ENCODE measurements at regions of chr2 and their contacts with region 1.

Region 1: DNA sequence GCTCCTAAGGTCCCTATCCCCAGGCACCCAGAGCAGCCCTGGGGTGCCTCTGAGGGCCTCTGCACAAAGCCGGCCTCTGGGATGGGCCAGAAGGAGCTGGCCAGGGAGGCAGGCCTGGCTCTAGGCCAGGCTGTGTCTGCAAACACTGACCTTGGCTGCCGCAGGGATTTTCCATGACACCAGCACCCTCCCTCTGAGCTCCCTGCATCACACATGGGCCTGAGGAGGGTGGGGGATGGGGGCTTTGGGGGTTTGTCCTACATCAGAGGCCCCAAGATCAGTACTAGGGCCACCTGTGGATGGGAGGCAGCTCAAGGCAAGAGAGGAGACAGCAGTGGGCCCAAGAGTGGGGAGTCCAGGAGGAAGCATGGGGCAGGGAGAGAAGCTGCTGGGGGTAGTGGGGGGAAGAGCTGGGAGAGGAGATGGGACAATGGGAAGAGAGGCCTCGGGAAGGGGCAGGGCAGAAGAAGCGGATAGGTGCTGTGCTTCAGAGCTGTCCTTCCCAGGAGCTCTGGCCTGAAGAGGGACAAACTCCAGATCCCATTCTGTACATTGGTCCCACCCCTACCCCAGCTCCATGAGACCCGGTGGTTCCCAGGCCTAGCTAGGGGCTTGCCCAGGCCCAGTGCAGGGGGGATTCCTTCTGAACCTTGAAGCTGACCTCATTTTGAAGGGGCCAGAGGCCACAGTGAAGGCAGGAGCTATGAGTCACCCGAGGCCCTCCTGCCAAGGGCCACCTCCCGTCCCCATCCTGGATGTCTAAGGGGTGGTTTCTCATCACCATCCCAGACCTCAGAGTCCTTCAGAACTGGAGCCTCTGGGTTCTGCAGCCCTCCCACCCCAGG is 28.0 kb downstream of the KCNK3 start:
- DNase-seq: peak; percentile 86 to 95
- ATAC-seq: peak; percentile 59 to 67
- H3K4me3 ChIP-seq: no peak overlapping the region
- H3K27ac ChIP-seq: peak overlapping the region; percentile 94
- H3K4me1 ChIP-seq: peaks cover 80% of the 10 kb centered on the region
- CTCF ChIP-seq: no peak
- EP300 ChIP-seq: peak; percentile 43 to 70; a peak in 3 of 5 replicates
- POLR2A ChIP-seq: no peak; the same call in 1 of the 2 replicates
- RAD21 ChIP-seq: 0 out of 5 replicates have a peak, but pooled peaks of 1 of the 2 experiments have one; percentile 34

Region 2: DNA sequence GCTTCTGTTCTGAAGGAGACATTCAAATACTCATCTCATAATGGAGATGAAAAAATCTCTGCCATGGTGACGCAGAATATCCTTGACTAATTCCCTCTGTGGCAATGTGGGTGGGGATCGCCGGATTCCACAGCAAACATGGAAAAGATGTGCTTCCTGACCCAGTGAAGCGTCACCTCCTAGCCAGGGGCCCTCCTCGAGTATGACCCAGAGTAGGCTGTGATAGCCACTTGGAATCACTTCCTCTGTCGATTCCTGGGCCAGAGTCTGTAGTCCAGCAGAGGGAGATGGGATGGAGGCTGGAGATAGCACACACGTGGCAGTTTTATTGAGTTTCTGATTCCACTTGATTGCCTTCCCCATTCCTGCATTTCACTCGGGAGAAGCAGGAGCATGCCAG is 282.0 kb before region 1 on chr2:
- CTCF ChIA-PET with region 1: no interaction called
- POLR2A ChIA-PET with region 1: no interaction called
- DNase-seq: no peak
- ATAC-seq: peak; percentile 48 to 77; a peak in 4 of 6 replicates
- H3K4me3 ChIP-seq: no peak overlapping the region
- H3K27ac ChIP-seq: no peak overlapping the region
- H3K4me1 ChIP-seq: no peaks in the 10 kb centered on the region
- CTCF ChIP-seq: no peak
- EP300 ChIP-seq: no peak
- POLR2A ChIP-seq: no peak
- RAD21 ChIP-seq: no peak

Region 3: GRCh38 chr2:26735096-26735495 is 14.6 kb after region 1 on chr2:
- CTCF ChIA-PET with region 1: interaction called, 14 read pairs
- POLR2A ChIA-PET with region 1: interaction called, 3 read pairs
- DNase-seq: peak in 1 of 2 experiments; percentile 86
- ATAC-seq: peak; percentile 51 to 61; a peak in 4 of 6 replicates
- H3K4me3 ChIP-seq: no peak overlapping the region
- H3K27ac ChIP-seq: peak overlapping the region; percentile 68 to 94; a peak in 5 of 6 replicates
- H3K4me1 ChIP-seq: peaks cover 52% of the 10 kb centered on the region
- CTCF ChIP-seq: 0 out of 3 replicates have a peak, but pooled peaks have one; percentile 11
- EP300 ChIP-seq: no peak; a peak in 2 of 5 replicates
- POLR2A ChIP-seq: no peak
- RAD21 ChIP-seq: no peak; a peak in 2 of 5 replicates

Measured in A549 (cell line).